ENCODE measurements at regions of chr16 and their contacts with region 1.

Region 1: DNA sequence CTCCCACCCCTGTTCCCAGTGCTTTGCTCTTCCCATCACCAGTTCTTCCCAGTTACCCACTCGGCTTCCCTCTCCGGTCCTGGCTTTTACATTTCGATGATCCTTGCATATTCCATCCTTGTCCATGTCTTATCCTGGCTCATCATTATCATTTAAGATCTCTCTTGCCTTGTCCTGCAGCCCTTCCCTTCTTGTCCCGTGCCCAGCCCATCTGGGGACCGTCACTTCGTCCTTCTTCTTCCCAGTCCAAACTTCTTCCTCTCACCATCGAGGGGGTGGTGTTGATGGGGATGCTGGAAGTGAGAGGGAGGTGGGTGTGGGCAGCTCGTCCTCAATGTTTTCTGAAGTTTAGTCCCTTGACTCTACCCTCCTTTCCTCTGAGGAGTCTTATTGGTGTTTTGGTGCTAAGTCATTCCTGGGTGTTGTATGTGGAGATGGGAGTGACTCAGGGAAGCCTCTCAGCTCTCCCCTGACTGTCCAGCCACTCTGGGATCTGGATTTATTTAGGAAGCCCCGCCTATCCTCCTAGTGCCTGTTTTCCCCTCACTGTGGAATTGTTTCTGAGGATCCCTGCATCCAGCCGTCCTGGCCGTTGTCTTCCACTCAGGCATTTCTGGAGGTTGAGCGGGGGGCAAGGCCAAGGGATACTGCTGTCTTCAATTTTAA is 975 bp downstream of the SNX29 start:
- DNase-seq: no peak
- ATAC-seq: peak; percentile 73
- H3K4me3 ChIP-seq: peak overlapping the region; percentile 64 to 94
- H3K27ac ChIP-seq: peak overlapping the region in 1 of 2 donors; percentile 81
- H3K4me1 ChIP-seq: no peaks in the 10 kb centered on the region
- H3K27me3 ChIP-seq: no peaks in the 10 kb centered on the region

Region 2: GRCh38 chr16:11916524-11917285 is 60.8 kb before region 1 on chr16:
- intact Hi-C with region 1: no loop called
- DNase-seq: no peak
- ATAC-seq: no peak
- H3K4me3 ChIP-seq: peak overlapping the region; percentile 43 to 45
- H3K27ac ChIP-seq: peak overlapping the region; percentile 67 to 91
- H3K4me1 ChIP-seq: peaks cover 0 to 6% of the 10 kb centered on the region in 2 donors
- H3K27me3 ChIP-seq: no peaks in the 10 kb centered on the region

Region 3: GRCh38 chr16:12062343-12063005 is 85.0 kb after region 1 on chr16:
- intact Hi-C with region 1: loop called in 1 of 2 experiments (anchors 2 kb)
- DNase-seq: peak; percentile 94 to 95
- ATAC-seq: peak; percentile 94
- H3K4me3 ChIP-seq: no peak overlapping the region
- H3K27ac ChIP-seq: peak overlapping the region; percentile 50 to 93
- H3K4me1 ChIP-seq: no peaks in the 10 kb centered on the region
- H3K27me3 ChIP-seq: no peaks in the 10 kb centered on the region